Colonic mucosa (tissue), 4 donors: ENCODE measurements at regions of chr4 and their contacts with region 1.

Region 1: DNA sequence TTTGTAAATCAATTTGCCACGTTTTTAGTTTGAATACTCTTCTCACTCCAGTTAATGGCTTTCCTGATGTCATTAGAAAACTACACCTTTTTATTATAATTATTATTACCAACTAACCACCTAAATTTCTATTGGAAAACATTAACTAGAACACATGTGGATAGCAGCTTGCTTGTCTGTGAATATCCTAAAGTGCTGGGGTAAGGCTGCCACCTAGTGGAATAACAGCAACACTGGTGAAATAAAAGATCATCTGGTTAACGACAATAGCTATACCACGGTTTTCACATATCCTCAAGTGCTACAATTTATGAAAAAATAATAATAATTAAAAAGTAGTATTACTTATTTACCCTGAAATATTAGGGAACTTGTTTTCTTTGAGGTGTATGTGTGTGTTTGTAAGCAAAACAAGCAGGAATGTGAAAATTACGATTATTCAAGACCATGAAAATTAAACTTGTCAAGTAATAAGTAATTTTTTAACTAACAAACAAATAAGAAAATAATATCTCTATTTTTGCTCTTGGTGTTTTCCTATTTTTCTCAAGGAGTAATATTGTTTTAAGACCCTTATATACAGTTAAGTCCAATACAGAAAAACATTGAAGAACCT is 130.1 kb upstream of the TECRL start:
- DNase-seq: peak; percentile 52
- H3K4me3 ChIP-seq: no peak overlapping the region
- H3K27ac ChIP-seq: no peak overlapping the region
- H3K4me1 ChIP-seq: no peaks in the 10 kb centered on the region
- H3K27me3 ChIP-seq: no peaks in the 10 kb centered on the region
- CTCF ChIP-seq: peak; percentile 67

Region 2: DNA sequence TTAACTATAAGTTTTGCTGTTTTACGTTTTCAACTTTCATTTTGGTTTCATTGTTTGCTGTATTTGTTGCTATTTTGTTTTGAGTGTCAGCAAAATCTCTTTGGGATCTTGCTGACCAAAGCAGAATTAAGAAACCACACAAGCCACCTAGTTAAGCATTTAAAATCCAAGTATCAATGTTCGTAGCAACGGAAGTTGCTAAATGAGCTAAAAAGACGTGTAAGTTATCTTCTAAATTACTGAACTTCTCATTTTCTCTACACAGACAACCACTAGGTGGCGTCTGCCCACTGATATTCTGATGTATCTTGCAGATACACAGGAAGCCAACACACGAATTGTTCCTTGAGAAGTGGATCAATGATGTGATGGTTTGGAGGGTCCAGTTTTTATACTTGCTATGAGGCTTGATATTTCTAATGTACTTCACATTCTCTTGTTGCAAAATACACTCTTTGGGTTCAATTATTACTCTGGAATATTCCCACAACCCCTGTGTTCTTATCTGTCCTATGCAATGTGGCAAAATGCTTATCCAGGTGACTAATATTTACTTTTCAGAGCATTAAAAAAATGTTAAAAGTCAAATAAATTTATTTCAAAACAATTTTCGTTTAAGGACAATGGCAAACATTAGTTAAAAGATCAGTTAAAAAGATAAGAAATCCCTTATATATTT is 380.6 kb before region 1 on chr4:
- intact Hi-C with region 1: loop called (anchors 5 kb)
- DNase-seq: peak; percentile 44
- H3K4me3 ChIP-seq: no peak overlapping the region
- H3K27ac ChIP-seq: no peak overlapping the region
- H3K4me1 ChIP-seq: no peaks in the 10 kb centered on the region
- H3K27me3 ChIP-seq: no peaks in the 10 kb centered on the region
- CTCF ChIP-seq: peak; percentile 47

Region 3: GRCh38 chr4:64166365-64166764 is 373.0 kb before region 1 on chr4:
- intact Hi-C with region 1: loop called (anchors 5 kb)
- DNase-seq: no peak
- H3K4me3 ChIP-seq: no peak overlapping the region
- H3K27ac ChIP-seq: no peak overlapping the region
- H3K4me1 ChIP-seq: no peaks in the 10 kb centered on the region
- H3K27me3 ChIP-seq: no peaks in the 10 kb centered on the region
- CTCF ChIP-seq: no peak

Region 4: DNA sequence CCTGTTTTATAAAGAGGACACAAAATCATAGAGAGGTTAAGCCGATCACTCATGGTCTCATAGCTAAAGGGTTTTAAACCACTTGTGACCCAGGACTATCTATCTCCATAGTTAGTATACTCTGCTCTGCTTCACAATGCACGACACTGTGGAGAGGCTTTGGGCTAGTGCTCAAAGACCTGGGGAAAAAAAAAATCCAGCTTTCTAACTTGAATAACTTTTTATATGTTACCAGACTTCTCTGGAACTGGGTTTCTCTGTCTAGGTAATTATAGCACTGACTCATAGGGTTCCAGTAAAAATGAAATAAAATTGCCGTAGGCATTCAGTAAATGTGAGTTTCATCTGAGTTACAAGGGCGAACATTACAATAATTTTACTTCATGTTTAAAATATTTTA is 143.6 kb after region 1 on chr4:
- intact Hi-C with region 1: no loop called
- DNase-seq: no peak
- H3K4me3 ChIP-seq: no peak overlapping the region
- H3K27ac ChIP-seq: no peak overlapping the region
- H3K4me1 ChIP-seq: no peaks in the 10 kb centered on the region
- H3K27me3 ChIP-seq: no peaks in the 10 kb centered on the region
- CTCF ChIP-seq: no peak